ENCODE measurements at regions of chr17 and their contacts with region 1.

Region 1: GRCh38 chr17:68247445-68248198 is at the start of gene AMZ2:
- DNase-seq: peak; percentile 100
- ATAC-seq: peak; percentile 87
- H3K4me3 Mint-ChIP-seq: peak within 1 kb of the TSS; percentile 92
- H3K27ac Mint-ChIP-seq: peak within 1 kb of the TSS; percentile 95
- H3K4me1 Mint-ChIP-seq: peaks cover 53% of the 10 kb centered on the region
- H3K27me3 Mint-ChIP-seq: no peaks in the 10 kb centered on the region
- CTCF ChIP-seq: no peak
- total RNA-seq, gene AMZ2: 42.1 and 55.4 TPM in 2 replicates

Region 2: DNA sequence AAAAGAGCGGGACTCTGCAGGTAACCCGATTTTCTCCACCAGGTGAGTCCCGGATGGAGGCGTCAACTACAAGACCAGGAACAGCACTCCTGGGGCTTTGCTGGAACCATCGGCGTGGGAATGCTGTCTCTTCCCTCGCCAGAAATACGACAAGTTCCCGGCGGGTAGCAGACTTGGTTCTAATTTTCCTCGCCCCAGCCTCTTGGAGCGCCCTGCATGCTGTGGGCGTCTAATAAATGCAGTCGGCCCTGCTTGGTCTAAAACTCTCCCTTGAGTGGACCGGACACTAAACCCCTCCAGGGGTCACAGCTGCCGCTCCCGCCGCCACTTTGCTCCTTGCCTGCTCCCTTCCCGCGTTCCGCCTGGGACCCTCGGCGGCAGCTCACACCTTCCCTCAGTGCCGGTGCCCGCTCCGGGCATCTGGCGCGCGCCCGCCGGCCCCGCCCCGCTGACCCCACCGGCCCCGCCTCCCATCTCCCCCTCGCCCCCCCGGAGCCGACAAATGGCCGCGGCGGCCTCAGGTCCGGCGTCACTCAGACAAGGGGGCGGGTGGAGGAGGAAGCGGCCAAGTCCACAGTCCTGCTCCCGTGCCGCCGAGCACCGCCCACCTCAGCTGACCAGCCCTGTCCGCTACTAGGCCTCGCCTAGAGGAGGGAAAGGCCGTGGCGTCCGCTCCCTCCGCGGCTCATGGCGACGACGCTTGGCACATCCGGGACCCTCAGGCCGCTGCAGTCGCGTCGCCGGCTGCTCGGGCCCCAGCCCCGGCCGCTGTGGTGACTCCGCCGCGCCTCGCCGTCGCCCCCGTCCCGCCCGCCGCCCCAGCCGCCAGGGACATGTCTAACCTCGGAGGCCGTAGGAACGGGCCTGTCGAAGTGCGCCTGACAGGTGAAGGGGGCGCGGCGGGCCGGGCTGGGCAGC is 146.3 kb before region 1 on chr17:
- CTCF ChIA-PET with region 1: no interaction called
- POLR2A ChIA-PET with region 1: no interaction called
- intact Hi-C with region 1: no loop called
- DNase-seq: peak; percentile 75
- ATAC-seq: peak; percentile 86
- H3K4me3 Mint-ChIP-seq: peak overlapping the region; percentile 93
- H3K27ac Mint-ChIP-seq: peak overlapping the region; percentile 85
- H3K4me1 Mint-ChIP-seq: peaks cover 31% of the 10 kb centered on the region
- H3K27me3 Mint-ChIP-seq: no peaks in the 10 kb centered on the region
- CTCF ChIP-seq: no peak

Region 3: DNA sequence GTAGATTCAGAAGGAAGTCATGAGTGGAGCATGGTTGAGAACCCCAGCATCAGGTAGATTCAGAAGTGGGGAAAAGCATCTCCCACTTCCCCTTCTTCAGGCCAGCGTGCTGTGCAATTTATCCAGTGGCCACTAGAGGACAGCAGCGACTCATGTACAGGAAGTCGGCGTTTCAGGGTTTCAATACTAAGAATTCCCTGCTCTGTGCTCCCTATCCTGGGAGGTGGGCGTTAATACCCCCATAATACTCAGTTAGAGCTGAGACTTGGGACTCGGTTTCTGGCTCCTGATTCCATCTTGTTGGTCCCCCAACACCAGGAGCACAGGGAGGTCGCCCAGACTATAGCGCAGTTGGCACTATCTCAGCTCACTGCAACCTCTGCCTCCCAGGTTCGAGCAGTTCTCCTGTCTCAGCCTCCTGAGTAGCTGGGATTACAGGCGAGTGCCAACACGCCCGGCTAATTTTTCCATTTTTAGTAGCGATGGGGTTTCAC is 75.1 kb before region 1 on chr17:
- CTCF ChIA-PET with region 1: interaction called, 6 read pairs
- POLR2A ChIA-PET with region 1: interaction called, 7 read pairs
- intact Hi-C with region 1: loop called (anchors 2 kb)
- DNase-seq: peak; percentile 58
- ATAC-seq: peak; percentile 97
- H3K4me3 Mint-ChIP-seq: no peak overlapping the region
- H3K27ac Mint-ChIP-seq: no peak overlapping the region
- H3K4me1 Mint-ChIP-seq: peaks cover 6% of the 10 kb centered on the region
- H3K27me3 Mint-ChIP-seq: no peaks in the 10 kb centered on the region
- CTCF ChIP-seq: peak; percentile 91

Region 4: DNA sequence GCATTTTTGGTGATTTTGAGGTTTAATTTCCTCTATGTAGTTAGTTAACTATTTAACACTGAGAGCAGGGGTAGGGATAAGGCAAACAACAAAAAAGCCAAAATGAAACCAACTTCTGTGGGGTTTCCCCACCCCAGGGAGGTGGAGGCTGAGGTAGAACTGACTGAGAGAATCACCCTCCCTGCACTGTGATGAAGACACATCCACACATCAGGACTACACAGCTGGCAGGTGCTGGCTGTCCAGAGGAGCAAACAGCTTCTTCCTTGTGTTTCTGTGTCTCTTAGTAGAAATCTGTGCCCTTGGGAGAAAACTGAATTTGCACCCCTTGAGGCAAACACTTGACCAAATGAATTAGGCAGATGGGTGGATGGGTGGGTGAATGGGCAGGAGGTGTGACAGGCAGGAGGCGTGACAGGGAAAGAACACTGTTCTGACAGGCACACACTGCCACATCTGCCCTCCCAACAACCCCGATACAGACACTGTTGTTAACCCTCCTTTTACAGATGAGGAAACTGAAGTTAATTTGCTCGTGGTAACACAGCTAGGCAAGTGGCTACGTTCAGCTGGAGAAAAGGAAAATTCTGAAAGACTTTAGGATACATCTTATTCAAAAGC is 62.7 kb before region 1 on chr17:
- CTCF ChIA-PET with region 1: no interaction called
- POLR2A ChIA-PET with region 1: interaction called, 85 read pairs
- intact Hi-C with region 1: no loop called
- DNase-seq: no peak
- ATAC-seq: peak; percentile 69
- H3K4me3 Mint-ChIP-seq: peak overlapping the region; percentile 62
- H3K27ac Mint-ChIP-seq: peak overlapping the region; percentile 91
- H3K4me1 Mint-ChIP-seq: peaks cover 66% of the 10 kb centered on the region
- H3K27me3 Mint-ChIP-seq: no peaks in the 10 kb centered on the region
- CTCF ChIP-seq: no peak

Region 5: GRCh38 chr17:68196944-68197595 is 50.6 kb before region 1 on chr17:
- CTCF ChIA-PET with region 1: interaction called, 14 read pairs
- POLR2A ChIA-PET with region 1: interaction called, 63 read pairs
- intact Hi-C with region 1: no loop called
- DNase-seq: peak; percentile 53
- ATAC-seq: peak; percentile 32
- H3K4me3 Mint-ChIP-seq: peak overlapping the region; percentile 78
- H3K27ac Mint-ChIP-seq: no peak overlapping the region
- H3K4me1 Mint-ChIP-seq: peaks cover 44% of the 10 kb centered on the region
- H3K27me3 Mint-ChIP-seq: peaks cover 10% of the 10 kb centered on the region
- CTCF ChIP-seq: no peak

Region 6: DNA sequence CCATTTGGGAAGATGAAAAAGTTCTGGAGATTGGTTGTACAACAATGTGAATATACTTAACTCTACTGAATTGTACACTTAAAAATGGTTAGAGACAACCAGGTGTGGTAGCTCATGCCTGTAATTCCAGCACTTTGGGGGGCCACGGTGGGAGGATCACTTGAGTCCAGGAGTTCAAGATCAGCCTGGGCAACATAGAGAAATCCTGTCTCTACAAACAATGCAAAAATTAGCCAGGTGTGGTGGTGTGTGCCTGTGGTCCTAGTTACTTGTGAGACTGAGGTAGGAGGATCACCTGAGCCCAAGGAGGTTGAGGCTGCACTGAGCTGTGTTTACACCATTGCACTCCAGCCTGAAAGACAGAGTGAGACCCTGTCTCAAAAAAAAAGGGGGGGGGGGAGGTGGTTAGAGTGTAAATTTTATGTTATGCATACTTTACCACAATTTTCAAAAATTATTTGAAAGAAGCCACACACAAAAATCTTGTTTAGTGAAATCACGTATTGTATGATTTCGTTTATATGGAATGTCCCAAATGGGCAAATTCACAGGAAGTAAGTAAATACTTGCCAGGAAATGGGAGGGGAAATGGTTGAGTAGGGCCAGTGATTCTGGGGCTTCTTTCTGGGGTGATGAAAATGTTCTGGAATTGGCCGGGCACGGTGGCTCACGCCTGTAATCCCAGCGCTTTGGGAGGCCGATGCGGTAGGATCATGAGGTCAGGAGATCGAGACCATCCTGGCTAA is 36.9 kb before region 1 on chr17:
- CTCF ChIA-PET with region 1: interaction called, 15 read pairs
- POLR2A ChIA-PET with region 1: interaction called, 145 read pairs
- intact Hi-C with region 1: loop called (anchors 1 kb)
- DNase-seq: no peak
- ATAC-seq: no peak
- H3K4me3 Mint-ChIP-seq: no peak overlapping the region
- H3K27ac Mint-ChIP-seq: peak overlapping the region; percentile 6
- H3K4me1 Mint-ChIP-seq: peaks cover 62% of the 10 kb centered on the region
- H3K27me3 Mint-ChIP-seq: no peaks in the 10 kb centered on the region
- CTCF ChIP-seq: no peak

Region 7: DNA sequence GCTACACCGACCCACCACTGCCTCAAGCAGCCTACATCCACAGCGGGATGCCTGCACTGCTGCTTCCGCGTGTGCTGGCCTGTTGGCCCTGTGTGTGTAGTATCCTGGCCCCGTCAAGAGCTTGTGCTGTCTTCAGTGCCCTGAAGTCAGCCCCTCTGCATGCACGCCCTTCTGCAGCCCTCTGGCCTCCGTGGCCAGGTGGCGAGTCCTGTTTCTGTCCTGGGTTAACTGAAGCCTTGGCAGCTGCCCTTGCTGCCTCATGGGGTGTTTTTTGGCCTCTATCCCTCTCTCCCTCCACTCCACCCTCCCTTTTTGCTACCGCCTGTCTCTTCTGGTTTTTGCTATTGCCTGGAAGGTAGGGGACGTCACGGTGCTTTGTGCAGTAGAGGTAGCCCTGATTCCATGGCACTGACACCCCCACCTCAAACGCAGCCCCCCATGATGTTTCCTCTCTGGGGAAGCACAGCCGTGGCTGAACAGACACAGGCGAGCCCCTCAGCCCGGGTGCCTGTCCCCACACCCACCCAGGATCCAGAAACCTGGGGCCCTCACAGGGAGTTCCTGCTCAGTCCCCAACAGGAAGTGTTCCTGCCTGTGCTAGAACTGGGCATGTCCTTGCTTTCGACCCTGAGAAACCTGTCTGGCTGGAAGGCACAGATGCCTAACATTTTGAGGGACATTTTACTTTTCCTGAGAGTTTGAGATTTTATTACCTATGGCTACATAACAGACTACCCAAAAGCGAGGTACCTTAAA is 18.6 kb before region 1 on chr17:
- CTCF ChIA-PET with region 1: no interaction called
- POLR2A ChIA-PET with region 1: interaction called, 285 read pairs
- intact Hi-C with region 1: loop called (anchors 1 kb)
- DNase-seq: no peak
- ATAC-seq: no peak
- H3K4me3 Mint-ChIP-seq: no peak overlapping the region
- H3K27ac Mint-ChIP-seq: peak overlapping the region; percentile 85
- H3K4me1 Mint-ChIP-seq: peaks cover 80% of the 10 kb centered on the region
- H3K27me3 Mint-ChIP-seq: no peaks in the 10 kb centered on the region
- CTCF ChIP-seq: no peak

Region 8: DNA sequence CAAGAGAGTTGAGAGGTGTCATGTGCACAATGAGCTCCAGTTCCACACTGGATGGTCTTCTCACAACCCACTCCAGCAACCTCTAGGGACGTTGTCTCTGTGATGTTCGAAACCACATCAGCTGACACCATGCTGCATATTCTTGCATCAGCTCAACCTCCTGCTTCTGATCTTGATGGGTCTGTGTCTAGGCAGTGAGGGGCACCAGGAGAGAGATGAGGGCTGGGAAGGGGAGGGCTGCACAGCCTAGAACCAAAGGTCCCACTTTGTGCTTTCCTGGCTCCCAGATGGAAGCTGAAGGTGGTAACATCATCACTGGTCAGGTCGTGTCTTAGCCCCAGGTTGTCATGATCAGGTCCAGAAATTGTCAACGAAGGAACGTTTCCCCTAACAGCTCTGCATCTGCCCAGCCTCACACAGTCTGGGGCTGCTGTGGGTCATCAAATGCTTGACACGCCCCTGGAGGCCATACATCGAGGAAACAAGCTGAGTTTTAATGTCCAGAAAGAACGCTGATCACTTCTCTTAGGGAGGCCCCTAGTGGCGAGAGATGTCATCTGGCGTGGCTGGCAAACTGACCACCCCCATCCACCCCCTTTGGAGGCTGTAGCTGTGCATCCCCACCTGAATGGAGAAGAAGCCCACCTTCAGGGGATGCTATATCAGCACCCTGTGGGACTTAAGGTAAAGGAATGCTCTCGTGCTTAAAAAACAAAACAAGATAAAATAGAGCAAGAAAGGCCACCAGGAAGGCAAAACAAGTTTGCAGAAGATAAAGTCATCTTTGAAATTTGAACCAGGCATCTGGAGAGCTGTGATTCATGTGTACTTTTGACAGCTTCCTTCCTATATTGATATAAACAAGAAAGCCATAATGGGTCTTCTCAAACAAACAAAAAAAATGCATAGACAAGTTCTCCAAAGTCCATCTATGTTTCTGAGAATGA is 151.3 kb after region 1 on chr17:
- CTCF ChIA-PET with region 1: interaction called, 6 read pairs
- POLR2A ChIA-PET with region 1: interaction called, 14 read pairs
- intact Hi-C with region 1: no loop called
- DNase-seq: peak; percentile 23
- ATAC-seq: peak; percentile 76
- H3K4me3 Mint-ChIP-seq: no peak overlapping the region
- H3K27ac Mint-ChIP-seq: peak overlapping the region; percentile 62
- H3K4me1 Mint-ChIP-seq: peaks cover 7% of the 10 kb centered on the region
- H3K27me3 Mint-ChIP-seq: no peaks in the 10 kb centered on the region
- CTCF ChIP-seq: no peak

Measured in activated B cell treated with CpG ODN at 0.5 μM for 24 hours (primary cell).